Transverse colon (tissue), 4 donors: ENCODE measurements at regions of chrX and their contacts with region 1.

Region 1: DNA sequence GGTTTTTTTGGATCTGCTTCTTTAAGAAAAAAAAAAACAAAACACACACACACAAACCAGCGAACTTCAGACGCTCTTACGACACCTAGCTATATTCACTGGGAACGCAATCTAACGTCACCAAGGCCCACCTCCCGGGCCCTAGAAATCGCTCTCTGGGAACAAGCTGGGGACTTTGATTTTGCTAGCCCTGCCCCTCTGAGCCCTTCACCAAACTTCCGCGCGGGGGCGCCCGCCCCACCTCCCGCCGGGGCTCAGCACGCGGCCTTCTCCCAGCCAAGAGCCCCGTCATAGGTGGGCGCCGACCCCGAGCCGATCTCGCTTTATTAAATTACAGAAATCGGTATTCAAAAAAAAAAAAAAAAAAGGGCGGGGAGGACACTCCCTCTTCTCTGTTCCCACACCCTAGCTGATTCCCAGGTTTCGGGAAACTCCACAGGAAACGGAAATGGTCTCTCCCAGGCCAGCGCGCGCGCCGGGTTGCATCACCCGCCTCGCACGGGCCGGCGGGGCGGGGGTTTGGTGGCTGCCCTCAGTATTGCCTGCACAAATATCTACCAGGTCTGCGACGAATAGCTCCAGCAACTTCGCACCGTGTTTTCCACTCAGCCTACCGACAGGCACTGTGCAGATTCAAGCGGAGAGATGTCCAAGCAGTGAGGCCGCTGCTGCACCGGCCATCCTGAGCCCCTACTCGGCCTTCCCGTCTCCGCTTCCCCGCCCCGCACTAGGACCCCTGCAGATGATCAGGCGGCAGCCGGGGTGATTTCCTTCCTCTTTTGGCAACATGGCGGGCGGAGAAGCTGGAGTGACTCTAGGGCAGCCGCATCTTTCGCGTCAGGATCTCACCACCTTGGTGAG is at the start of gene EIF2S3:
- DNase-seq: peak; percentile 91
- H3K4me3 ChIP-seq: peak within 1 kb of the TSS in 2 of 4 donors; percentile 70 to 80
- H3K27ac ChIP-seq: peak within 1 kb of the TSS in 2 of 4 donors; percentile 89 to 92
- H3K4me1 ChIP-seq: peaks cover 0 to 6% (median 0%) of the 10 kb centered on the region in 4 donors
- H3K27me3 ChIP-seq: no peaks in the 10 kb centered on the region
- CTCF ChIP-seq: peak; percentile 49 to 69 (median 58)
- EP300 ChIP-seq: no peak
- POLR2A ChIP-seq: peak; percentile 78
- total RNA-seq, gene EIF2S3: 50.5 to 129 (median 80.5) TPM

Region 2: GRCh38 chrX:23694606-23695005 is 359.8 kb before region 1 on chrX:
- in situ Hi-C with region 1: loop called in 2 of 4 experiments (anchors 25 kb)
- intact Hi-C with region 1: no loop called
- DNase-seq: peak; percentile 55
- H3K4me3 ChIP-seq: no peak overlapping the region
- H3K27ac ChIP-seq: no peak overlapping the region
- H3K4me1 ChIP-seq: no peaks in the 10 kb centered on the region
- H3K27me3 ChIP-seq: no peaks in the 10 kb centered on the region
- CTCF ChIP-seq: peak in 4 of 5 experiments; percentile 21 to 57 (median 40)
- EP300 ChIP-seq: no peak
- POLR2A ChIP-seq: no peak

Region 3: GRCh38 chrX:23937100-23937499 is 117.3 kb before region 1 on chrX:
- in situ Hi-C with region 1: no loop called
- intact Hi-C with region 1: no loop called
- DNase-seq: no peak
- H3K4me3 ChIP-seq: no peak overlapping the region
- H3K27ac ChIP-seq: no peak overlapping the region
- H3K4me1 ChIP-seq: no peaks in the 10 kb centered on the region
- H3K27me3 ChIP-seq: no peaks in the 10 kb centered on the region
- CTCF ChIP-seq: no peak
- EP300 ChIP-seq: no peak
- POLR2A ChIP-seq: no peak

Region 4: DNA sequence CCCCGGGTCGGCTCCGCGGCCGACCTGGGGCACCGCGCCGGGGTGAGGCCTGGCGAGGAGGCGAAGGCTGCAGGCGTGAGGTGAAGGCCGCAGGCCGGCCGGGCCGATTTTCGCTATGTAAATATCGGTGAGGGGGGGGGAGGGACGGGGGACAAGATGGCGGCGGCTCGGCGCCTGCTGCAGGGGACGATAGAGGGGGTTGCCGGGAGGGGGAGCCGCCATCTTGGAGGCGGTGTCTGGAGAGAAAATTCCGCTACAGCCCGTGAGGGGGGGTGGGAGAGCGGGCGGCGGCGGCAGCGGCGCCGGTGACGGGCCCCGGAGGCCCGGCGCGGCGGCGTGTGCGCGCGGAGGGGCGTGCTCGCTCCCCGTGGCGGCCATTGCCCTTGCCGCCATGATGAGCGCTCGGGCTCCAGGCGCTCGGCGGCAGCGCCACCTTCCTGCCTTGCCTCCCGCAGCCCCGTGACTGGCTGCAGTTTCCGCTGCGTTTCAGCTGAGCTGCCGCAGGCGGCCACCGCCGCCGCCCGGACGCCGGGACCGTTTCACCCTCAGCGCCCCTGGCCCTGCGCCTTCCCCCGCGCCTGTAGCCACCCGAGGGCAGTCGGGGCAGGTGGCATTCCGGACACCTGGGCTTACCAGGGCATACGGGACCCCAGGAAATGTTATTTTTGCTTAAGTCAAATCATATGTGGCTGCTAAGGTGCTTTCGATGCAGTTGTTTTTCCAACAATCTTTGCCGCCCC is 95.8 kb after region 1 on chrX:
- in situ Hi-C with region 1: no loop called
- intact Hi-C with region 1: loop called (anchors 10 kb)
- DNase-seq: peak; percentile 95
- H3K4me3 ChIP-seq: peak overlapping the region; percentile 71 to 89 (median 74)
- H3K27ac ChIP-seq: peak overlapping the region; percentile 97 to 99 (median 98)
- H3K4me1 ChIP-seq: peaks cover 22 to 59% (median 41%) of the 10 kb centered on the region in 4 donors
- H3K27me3 ChIP-seq: no peaks in the 10 kb centered on the region
- CTCF ChIP-seq: peak; percentile 24 to 61 (median 44)
- EP300 ChIP-seq: no peak
- POLR2A ChIP-seq: peak; percentile 45

Region 5: GRCh38 chrX:24357106-24357505 is 302.7 kb after region 1 on chrX:
- in situ Hi-C with region 1: no loop called
- intact Hi-C with region 1: no loop called
- DNase-seq: no peak
- H3K4me3 ChIP-seq: no peak overlapping the region
- H3K27ac ChIP-seq: no peak overlapping the region
- H3K4me1 ChIP-seq: no peaks in the 10 kb centered on the region
- H3K27me3 ChIP-seq: no peaks in the 10 kb centered on the region
- CTCF ChIP-seq: no peak
- EP300 ChIP-seq: no peak
- POLR2A ChIP-seq: no peak